MCF 10A (cell line): ENCODE measurements at regions of chr6 and their contacts with region 1.

Region 1: GRCh38 chr6:112043032-112044007 is 10.6 kb upstream of the CCN6 start:
- DNase-seq: peak; percentile 80
- H3K4me3 Mint-ChIP-seq: peak overlapping the region; percentile 81
- H3K27ac Mint-ChIP-seq: peak overlapping the region; percentile 42
- H3K4me1 Mint-ChIP-seq: no peaks in the 10 kb centered on the region
- H3K27me3 Mint-ChIP-seq: no peaks in the 10 kb centered on the region
- CTCF ChIP-seq: peak; percentile 95

Region 2: DNA sequence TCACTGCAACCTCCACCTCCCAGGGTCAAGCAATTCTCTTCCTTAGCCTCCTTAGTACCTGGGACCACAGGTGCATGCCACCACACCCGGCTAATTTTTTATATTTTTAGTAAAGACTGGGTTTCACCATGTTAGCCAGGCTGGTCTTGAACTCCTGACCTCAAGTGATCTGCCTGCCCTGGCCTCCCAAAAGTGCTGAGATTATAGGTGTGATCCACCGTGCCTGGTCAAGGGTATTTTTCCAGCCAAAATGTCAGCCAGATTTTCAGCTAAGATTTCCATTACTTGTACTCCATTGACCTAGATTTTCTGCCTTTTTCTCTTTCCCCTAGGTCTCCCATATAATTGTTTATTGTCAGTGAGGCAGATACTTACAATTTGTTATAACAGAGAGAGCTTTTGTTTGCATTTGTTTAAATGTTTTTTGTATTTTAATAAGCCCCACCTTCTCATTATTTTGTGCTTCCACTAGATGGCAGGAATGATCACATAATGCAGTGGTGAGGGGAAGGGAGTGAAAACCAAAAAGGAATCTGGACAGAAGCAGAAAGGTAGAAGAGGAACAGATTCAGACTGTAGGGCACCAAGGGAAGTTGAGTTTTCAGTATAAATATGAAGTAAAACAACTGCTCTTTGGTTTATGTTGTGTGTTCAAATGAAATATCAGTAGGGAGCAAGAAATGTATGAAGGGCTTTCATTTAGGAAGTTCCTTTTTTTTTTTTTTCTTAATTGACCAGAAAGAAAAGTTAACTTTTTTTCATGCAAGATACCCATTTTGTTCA is 1031.8 kb before region 1 on chr6:
- CTCF ChIA-PET with region 1: interaction called, 3 read pairs
- POLR2A ChIA-PET with region 1: no interaction called
- intact Hi-C with region 1: loop called (anchors 1 kb)
- DNase-seq: peak; percentile 55
- H3K4me3 Mint-ChIP-seq: no peak overlapping the region
- H3K27ac Mint-ChIP-seq: no peak overlapping the region
- H3K4me1 Mint-ChIP-seq: no peaks in the 10 kb centered on the region
- H3K27me3 Mint-ChIP-seq: no peaks in the 10 kb centered on the region
- CTCF ChIP-seq: peak; percentile 45

Region 3: DNA sequence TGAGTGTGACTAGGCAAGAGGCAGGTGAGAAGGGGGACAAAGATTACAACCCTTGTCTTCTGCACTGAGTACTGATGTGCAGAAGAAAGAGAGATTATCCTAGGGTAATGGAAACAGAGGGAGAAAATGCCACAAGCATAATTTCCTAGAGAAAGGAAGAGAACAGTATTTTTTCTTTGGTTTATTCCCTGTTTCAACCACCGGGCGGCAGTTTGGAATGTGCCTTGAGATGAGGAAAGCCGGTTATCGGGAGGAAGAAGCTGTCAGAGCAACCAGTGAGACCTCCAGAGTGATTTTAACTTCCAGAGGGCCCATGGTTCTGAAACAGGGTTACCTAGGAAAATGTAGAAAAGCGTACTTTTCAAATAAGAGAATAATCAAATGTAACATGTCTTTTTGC is 681.7 kb before region 1 on chr6:
- CTCF ChIA-PET with region 1: interaction called, 3 read pairs
- POLR2A ChIA-PET with region 1: no interaction called
- intact Hi-C with region 1: loop called (anchors 5 kb)
- DNase-seq: peak; percentile 56
- H3K4me3 Mint-ChIP-seq: no peak overlapping the region
- H3K27ac Mint-ChIP-seq: no peak overlapping the region
- H3K4me1 Mint-ChIP-seq: no peaks in the 10 kb centered on the region
- H3K27me3 Mint-ChIP-seq: no peaks in the 10 kb centered on the region
- CTCF ChIP-seq: peak; percentile 53

Region 4: GRCh38 chr6:111696814-111697213 is 346.5 kb before region 1 on chr6:
- CTCF ChIA-PET with region 1: interaction called, 18 read pairs
- POLR2A ChIA-PET with region 1: no interaction called
- intact Hi-C with region 1: no loop called
- DNase-seq: no peak
- H3K4me3 Mint-ChIP-seq: no peak overlapping the region
- H3K27ac Mint-ChIP-seq: no peak overlapping the region
- H3K4me1 Mint-ChIP-seq: no peaks in the 10 kb centered on the region
- H3K27me3 Mint-ChIP-seq: no peaks in the 10 kb centered on the region
- CTCF ChIP-seq: no peak

Region 5: DNA sequence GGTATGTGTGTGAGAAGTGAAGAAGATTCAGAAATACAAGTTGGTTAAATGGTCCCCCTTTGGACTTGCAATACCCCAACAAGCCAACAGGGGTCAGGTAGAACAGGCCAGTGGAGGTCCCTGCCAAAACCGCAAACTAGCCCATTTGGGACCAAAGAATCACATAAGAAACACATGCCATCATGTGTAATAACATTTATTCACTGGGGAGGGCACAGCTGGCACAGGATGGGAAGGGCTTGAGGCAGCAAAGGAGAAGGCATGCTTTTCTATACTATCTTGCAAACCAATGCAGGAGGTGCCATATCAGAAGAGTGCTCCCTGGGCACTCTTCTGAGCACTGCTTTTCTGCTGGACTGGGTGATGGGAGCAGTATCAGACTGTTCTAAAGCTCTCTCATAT is 321.6 kb before region 1 on chr6:
- CTCF ChIA-PET with region 1: interaction called, 27 read pairs
- POLR2A ChIA-PET with region 1: no interaction called
- intact Hi-C with region 1: no loop called
- DNase-seq: peak; percentile 58
- H3K4me3 Mint-ChIP-seq: no peak overlapping the region
- H3K27ac Mint-ChIP-seq: no peak overlapping the region
- H3K4me1 Mint-ChIP-seq: peaks cover 19% of the 10 kb centered on the region
- H3K27me3 Mint-ChIP-seq: no peaks in the 10 kb centered on the region
- CTCF ChIP-seq: peak; percentile 79

Region 6: GRCh38 chr6:112010328-112010727 is 33.0 kb before region 1 on chr6:
- CTCF ChIA-PET with region 1: interaction called, 12 read pairs
- POLR2A ChIA-PET with region 1: no interaction called
- intact Hi-C with region 1: loop called (anchors 1 kb)
- DNase-seq: peak; percentile 20
- H3K4me3 Mint-ChIP-seq: no peak overlapping the region
- H3K27ac Mint-ChIP-seq: no peak overlapping the region
- H3K4me1 Mint-ChIP-seq: peaks cover 14% of the 10 kb centered on the region
- H3K27me3 Mint-ChIP-seq: no peaks in the 10 kb centered on the region
- CTCF ChIP-seq: no peak

Region 7: DNA sequence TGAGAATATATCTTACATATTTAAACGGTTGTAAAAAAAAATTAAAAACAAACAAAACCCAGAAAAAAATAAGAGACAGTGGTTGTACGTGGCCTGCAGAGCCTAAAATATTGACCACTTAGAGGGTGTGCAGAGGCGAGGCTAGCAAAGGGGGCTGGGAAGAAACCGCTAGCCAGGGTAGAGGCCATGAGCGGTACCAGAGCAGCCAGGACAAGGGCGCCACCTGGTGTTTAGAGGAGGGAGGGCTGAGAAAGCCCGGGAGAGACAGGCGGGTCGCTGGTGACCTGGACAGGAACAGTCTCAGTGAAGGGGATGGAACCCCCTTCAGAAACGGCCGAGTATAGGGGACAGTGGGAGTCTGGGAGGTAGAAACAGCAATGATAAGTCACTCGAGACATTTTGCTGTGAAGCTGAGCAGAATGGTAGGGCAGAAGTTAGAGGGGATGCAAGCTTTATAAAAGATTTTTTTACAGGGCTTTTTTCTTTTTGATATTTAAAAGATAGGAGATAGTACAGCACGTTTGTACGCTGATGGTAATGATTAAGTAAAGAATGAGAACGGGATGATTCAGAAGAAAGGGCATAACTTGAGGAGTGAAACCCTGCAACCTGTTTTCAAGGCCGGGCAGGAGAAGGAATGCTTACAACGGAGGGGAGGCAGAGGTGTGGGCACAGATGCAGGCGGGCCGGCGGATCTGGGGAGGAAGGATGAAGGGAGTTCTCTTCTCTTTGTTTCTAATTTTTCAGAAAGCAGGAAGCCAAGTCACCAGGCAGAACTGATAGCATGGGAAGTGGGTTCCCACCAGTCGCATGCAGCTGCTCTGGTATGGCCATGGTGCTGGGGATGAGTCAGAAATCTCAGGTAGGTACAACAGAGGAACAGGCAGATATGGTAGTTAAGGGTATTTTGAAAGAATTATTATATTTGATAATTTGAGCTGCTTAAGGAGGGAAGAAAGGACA is 120.3 kb after region 1 on chr6:
- CTCF ChIA-PET with region 1: interaction called, 32 read pairs
- POLR2A ChIA-PET with region 1: no interaction called
- intact Hi-C with region 1: loop called (anchors 1 kb)
- DNase-seq: peak; percentile 71
- H3K4me3 Mint-ChIP-seq: no peak overlapping the region
- H3K27ac Mint-ChIP-seq: no peak overlapping the region
- H3K4me1 Mint-ChIP-seq: peaks cover 6% of the 10 kb centered on the region
- H3K27me3 Mint-ChIP-seq: peaks cover 51% of the 10 kb centered on the region
- CTCF ChIP-seq: peak; percentile 85

Region 8: DNA sequence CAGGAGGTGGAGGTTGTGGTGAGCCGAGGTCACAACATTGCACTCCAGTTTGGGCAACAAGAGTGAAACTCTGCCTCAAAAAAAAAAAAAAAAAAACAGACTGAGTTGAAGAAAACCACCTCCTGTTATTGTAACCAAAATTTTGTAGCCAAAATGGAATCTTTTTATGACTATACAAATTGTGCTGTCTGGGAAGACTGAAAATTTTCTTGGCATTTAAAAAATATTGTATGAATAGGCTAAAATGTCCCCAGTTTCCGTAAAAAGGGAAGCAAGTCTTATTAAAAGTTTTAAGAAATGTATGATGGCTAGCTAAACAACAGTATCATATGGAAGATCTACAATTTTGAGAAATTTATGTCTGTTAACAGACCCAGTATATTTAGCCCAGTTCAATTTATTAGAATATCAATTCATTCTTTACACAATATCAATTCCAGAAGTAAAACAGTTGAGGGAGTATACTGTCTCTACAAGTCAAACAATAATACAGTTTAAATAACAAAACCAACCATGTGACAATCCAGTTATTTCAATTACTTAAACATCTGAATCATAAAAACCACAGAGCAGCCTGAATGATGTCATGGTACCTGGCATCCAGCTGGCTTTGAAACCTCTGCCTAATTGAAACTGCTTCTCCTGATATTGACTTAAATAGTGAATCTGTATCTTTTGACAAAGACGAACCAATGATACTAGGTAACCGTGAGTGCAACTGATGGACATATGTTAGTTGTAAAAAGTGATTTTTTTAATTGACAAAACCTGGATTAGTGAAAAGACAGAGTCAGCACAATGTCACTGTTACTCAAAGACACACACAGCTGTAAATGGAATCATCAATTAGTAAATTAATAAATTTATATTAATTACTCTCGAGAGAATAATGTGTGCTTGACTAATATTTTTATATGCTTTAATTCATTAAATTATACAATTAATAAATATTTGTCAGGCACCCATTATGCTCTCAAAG is 1647.2 kb after region 1 on chr6:
- CTCF ChIA-PET with region 1: no interaction called
- POLR2A ChIA-PET with region 1: no interaction called
- intact Hi-C with region 1: no loop called
- DNase-seq: peak; percentile 88
- H3K4me3 Mint-ChIP-seq: no peak overlapping the region
- H3K27ac Mint-ChIP-seq: no peak overlapping the region
- H3K4me1 Mint-ChIP-seq: peaks cover 29% of the 10 kb centered on the region
- H3K27me3 Mint-ChIP-seq: no peaks in the 10 kb centered on the region
- CTCF ChIP-seq: no peak